Activated CD4-positive, alpha-beta T cell treated with anti-CD3 and anti-CD28 coated beads, Interleukin-2, amount 10 ng/mL, durations not matched to agents 24 days and 14 days (primary cell): ENCODE measurements at regions of chr13 and their contacts with region 1.

Region 1: DNA sequence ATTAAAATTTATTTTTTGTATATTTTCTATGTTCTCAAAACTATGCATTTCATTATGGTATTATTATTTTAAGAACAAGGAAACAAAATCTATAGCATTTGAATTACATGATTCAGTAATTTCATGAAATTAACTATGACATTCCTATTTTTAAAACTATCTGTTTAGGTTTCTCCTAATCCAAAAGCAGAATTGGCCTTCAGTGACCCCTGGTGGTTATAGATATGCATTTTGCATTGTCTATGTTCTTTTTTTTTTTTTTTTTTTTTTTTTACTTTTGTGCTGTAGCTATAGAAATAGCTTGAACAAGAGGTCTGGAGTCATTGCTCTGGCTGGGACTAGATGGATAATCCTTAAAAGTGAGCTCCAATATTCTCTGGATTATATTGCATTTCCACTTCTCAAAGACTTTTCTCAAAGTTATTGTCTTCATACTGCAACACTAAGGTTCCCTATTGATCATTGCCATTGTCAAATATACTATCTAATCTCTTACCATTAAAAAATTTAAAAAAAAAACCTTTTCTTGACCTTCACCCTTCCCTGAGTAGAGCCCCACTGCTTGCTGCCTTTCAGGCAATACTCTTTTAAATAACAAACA is 15.9 kb upstream of the DNAJC3 start:
- DNase-seq: peak; percentile 72
- H3K4me3 Mint-ChIP-seq: no peak overlapping the region
- H3K27ac Mint-ChIP-seq: no peak overlapping the region
- H3K4me1 Mint-ChIP-seq: no peaks in the 10 kb centered on the region
- H3K27me3 Mint-ChIP-seq: peaks cover 27% of the 10 kb centered on the region

Region 2: GRCh38 chr13:95536632-95537241 is 124.3 kb before region 1 on chr13:
- intact Hi-C with region 1: loop called (anchors 2 kb)
- DNase-seq: no peak
- H3K4me3 Mint-ChIP-seq: no peak overlapping the region
- H3K27ac Mint-ChIP-seq: no peak overlapping the region
- H3K4me1 Mint-ChIP-seq: peaks cover 7% of the 10 kb centered on the region
- H3K27me3 Mint-ChIP-seq: peaks cover 23% of the 10 kb centered on the region

Region 3: DNA sequence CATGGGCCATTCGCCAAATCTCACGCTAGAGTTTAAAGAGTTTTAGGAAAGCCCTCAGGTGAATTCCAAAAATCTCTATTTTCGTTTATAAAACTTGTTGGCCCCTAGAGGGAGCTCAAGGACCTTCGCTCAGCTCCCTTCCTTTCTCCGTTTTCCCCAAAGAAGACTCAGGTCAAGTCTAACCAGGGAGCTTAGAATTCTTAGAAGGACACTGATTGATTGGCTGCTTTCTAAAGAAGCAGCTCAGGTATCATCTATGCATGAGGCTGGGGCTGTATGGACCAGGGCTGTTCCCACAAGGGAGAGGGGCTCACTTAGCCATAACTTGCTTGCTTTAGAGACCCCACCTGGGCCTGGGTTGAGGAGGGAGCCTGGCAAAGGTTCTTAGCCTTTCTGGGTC is 37.1 kb before region 1 on chr13:
- intact Hi-C with region 1: loop called (anchors 1 kb)
- DNase-seq: peak; percentile 74
- H3K4me3 Mint-ChIP-seq: no peak overlapping the region
- H3K27ac Mint-ChIP-seq: no peak overlapping the region
- H3K4me1 Mint-ChIP-seq: no peaks in the 10 kb centered on the region
- H3K27me3 Mint-ChIP-seq: peaks cover 33% of the 10 kb centered on the region